T-cell (primary cell): ENCODE measurements at regions of chr1 and their contacts with region 1.

Region 1: DNA sequence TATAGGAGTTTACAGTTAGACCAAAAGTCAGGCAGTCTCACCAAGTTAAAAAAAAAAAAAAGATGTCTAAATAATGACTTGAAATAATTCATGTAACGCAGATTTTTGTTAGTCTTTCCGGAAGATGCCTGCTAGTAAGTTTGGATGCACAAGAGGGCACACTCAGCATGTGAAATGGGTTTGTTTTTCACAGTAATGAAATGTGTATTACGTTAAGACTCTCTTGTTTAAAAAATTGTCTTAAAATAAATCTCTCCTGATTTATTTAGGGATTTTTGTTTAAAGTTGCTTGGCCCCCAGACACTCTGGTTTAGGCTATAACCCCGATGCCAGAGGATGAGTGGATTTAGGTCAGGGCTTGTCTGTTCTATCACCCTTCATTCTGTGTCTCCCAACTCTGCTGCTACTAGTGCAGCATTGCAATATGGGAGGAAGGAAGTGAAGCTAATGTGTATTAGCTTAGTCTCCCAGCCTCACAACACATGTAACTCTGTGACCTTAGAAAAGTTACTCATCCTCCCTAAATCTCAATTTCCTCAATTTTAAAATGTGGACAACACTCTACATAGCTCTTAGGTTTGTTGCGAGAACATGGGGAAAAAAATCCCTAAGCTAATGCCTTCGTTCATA is 25.7 kb downstream of the CTH start:
- DNase-seq: no peak
- ATAC-seq: no peak
- H3K4me3 ChIP-seq: no peak overlapping the region
- H3K4me3 Mint-ChIP-seq: no peak overlapping the region
- H3K27ac ChIP-seq: no peak overlapping the region
- H3K27ac Mint-ChIP-seq: no peak overlapping the region
- H3K4me1 ChIP-seq: no peaks in the 10 kb centered on the region
- H3K4me1 Mint-ChIP-seq: no peaks in the 10 kb centered on the region
- H3K27me3 ChIP-seq: no peaks in the 10 kb centered on the region
- H3K27me3 Mint-ChIP-seq: no peaks in the 10 kb centered on the region

Region 2: GRCh38 chr1:70354332-70355110 is 82.2 kb before region 1 on chr1 and contains the start of gene ANKRD13C:
- CTCF ChIA-PET with region 1: no interaction called
- POLR2A ChIA-PET with region 1: no interaction called
- DNase-seq: peak; percentile 80 to 94 (median 89)
- ATAC-seq: peak; percentile 90 to 96 (median 94)
- H3K4me3 ChIP-seq: peak within 1 kb of the TSS; percentile 80 to 90
- H3K4me3 Mint-ChIP-seq: peak within 1 kb of the TSS; percentile 91 to 96 (median 94)
- H3K27ac ChIP-seq: peak within 1 kb of the TSS; percentile 89
- H3K27ac Mint-ChIP-seq: peak within 1 kb of the TSS; percentile 94 to 98
- H3K4me1 ChIP-seq: peaks cover 16 to 23% of the 10 kb centered on the region in 2 experiments
- H3K4me1 Mint-ChIP-seq: peaks cover 50 to 54% (median 53%) of the 10 kb centered on the region in 3 donors
- H3K27me3 ChIP-seq: no peaks in the 10 kb centered on the region
- H3K27me3 Mint-ChIP-seq: no peaks in the 10 kb centered on the region
- total RNA-seq, gene ANKRD13C: 26.3 to 28.7 (median 27.2) TPM

Region 3: GRCh38 chr1:70387507-70387906 is 49.2 kb before region 1 on chr1:
- CTCF ChIA-PET with region 1: no interaction called
- POLR2A ChIA-PET with region 1: interaction called in 1 of 2 experiments, 12 read pairs
- DNase-seq: no peak
- ATAC-seq: no peak
- H3K4me3 ChIP-seq: no peak overlapping the region
- H3K4me3 Mint-ChIP-seq: no peak overlapping the region
- H3K27ac ChIP-seq: no peak overlapping the region
- H3K27ac Mint-ChIP-seq: no peak overlapping the region
- H3K4me1 ChIP-seq: no peaks in the 10 kb centered on the region
- H3K4me1 Mint-ChIP-seq: no peaks in the 10 kb centered on the region
- H3K27me3 ChIP-seq: peaks cover 0 to 4% of the 10 kb centered on the region in 2 experiments
- H3K27me3 Mint-ChIP-seq: peaks cover 6 to 9% of the 10 kb centered on the region in 2 donors

Region 4: DNA sequence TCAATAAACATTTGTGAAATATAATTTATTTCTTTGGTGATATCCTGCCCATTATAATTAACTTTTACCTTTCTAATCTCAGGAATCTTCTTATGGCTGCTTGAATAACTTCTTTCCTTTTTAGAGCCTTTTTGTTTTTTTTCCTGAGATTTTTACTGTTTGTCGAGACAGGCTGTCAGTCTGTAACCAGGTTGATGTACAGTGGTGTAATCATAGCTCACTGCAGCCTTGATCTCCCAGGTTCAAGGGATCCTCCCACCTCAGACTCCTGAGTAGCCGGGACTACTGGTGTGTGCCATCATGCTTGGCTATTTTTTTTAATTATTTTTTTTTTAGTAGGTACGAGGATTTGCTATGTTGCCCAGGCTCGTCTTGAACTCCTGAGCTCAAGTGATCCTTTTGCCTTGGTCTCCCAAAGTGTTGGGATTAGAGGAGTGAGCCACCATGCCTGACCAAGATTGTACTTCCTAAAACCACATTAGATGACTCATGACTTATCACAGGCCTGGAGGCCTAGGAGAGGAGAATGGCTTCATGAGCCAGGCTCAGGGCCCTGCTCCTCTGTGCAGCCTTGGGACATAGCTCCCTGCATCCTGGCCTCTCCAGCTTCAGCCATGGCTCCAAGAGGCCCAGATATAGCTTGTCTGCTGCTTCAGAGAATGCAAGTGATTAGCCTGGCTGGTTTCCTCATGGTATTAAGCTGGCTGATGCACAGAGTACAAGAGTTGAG is 22.9 kb after region 1 on chr1:
- CTCF ChIA-PET with region 1: no interaction called
- POLR2A ChIA-PET with region 1: interaction called in 1 of 2 experiments, 12 read pairs
- DNase-seq: no peak
- ATAC-seq: no peak
- H3K4me3 ChIP-seq: no peak overlapping the region
- H3K4me3 Mint-ChIP-seq: no peak overlapping the region
- H3K27ac ChIP-seq: no peak overlapping the region
- H3K27ac Mint-ChIP-seq: no peak overlapping the region
- H3K4me1 ChIP-seq: no peaks in the 10 kb centered on the region
- H3K4me1 Mint-ChIP-seq: no peaks in the 10 kb centered on the region
- H3K27me3 ChIP-seq: no peaks in the 10 kb centered on the region
- H3K27me3 Mint-ChIP-seq: peaks cover 5 to 16% of the 10 kb centered on the region in 2 donors